HCT116 (cell line): ENCODE measurements at regions of chr5 and their contacts with region 1.

Region 1: GRCh38 chr5:36397901-36398536 is 96.3 kb upstream of the RANBP3L start:
- DNase-seq: peak; percentile 28
- ATAC-seq: peak; percentile 74
- H3K4me3 ChIP-seq: no peak overlapping the region
- H3K27ac ChIP-seq: no peak overlapping the region
- H3K4me1 ChIP-seq: no peaks in the 10 kb centered on the region
- H3K27me3 ChIP-seq: no peaks in the 10 kb centered on the region
- CTCF ChIP-seq: peak; percentile 35 to 56 (median 46); a peak in 5 of 6 replicates
- POLR2A ChIP-seq: no peak
- RAD21 ChIP-seq: peak; percentile 67

Region 2: DNA sequence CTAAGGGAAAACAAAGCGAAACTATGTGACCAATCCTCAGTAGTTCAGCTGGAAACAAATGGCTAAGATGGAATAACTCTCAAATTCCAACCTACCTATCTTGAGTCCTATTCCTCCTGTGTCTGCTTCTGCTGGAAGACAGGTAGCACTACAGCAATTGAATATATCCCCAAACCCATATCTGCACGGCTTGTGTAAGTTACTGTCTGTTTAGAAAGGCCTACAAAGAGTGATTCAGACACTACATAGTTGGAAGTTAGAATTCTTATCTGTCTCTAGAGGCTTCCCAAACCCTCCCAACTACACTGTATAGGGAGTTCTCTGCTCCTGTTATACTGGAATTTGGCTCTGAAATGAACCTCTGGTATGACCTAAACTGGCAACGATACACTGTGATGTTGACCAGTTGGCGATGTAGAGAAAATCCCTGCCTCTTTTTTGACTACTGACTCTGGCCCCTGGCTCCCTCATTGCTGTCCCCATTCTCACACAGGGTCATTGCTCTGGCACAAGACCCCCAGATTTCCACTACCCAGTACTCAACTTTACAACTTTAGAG is 133.7 kb before region 1 on chr5:
- CTCF ChIA-PET with region 1: interaction called, 3 read pairs
- POLR2A ChIA-PET with region 1: no interaction called
- RAD21 ChIA-PET with region 1: no interaction called
- intact Hi-C with region 1: loop called (anchors 1 kb)
- DNase-seq: no peak
- ATAC-seq: no peak
- H3K4me3 ChIP-seq: no peak overlapping the region
- H3K27ac ChIP-seq: no peak overlapping the region
- H3K4me1 ChIP-seq: no peaks in the 10 kb centered on the region
- H3K27me3 ChIP-seq: no peaks in the 10 kb centered on the region
- CTCF ChIP-seq: no peak
- POLR2A ChIP-seq: no peak
- RAD21 ChIP-seq: no peak

Region 3: GRCh38 chr5:36305571-36306326 is 92.3 kb before region 1 on chr5:
- CTCF ChIA-PET with region 1: no interaction called
- POLR2A ChIA-PET with region 1: no interaction called
- RAD21 ChIA-PET with region 1: no interaction called
- intact Hi-C with region 1: no loop called
- DNase-seq: peak; percentile 21
- ATAC-seq: peak; percentile 98
- H3K4me3 ChIP-seq: no peak overlapping the region
- H3K27ac ChIP-seq: no peak overlapping the region
- H3K4me1 ChIP-seq: no peaks in the 10 kb centered on the region
- H3K27me3 ChIP-seq: peaks cover 4% of the 10 kb centered on the region; the same call in 1 of the 2 replicates
- CTCF ChIP-seq: peak; percentile 61 to 80 (median 76)
- POLR2A ChIP-seq: no peak
- RAD21 ChIP-seq: peak; percentile 82

Region 4: GRCh38 chr5:36646507-36647023 is 248.5 kb after region 1 on chr5:
- CTCF ChIA-PET with region 1: no interaction called
- POLR2A ChIA-PET with region 1: no interaction called
- RAD21 ChIA-PET with region 1: no interaction called
- intact Hi-C with region 1: no loop called
- DNase-seq: peak; percentile 27
- ATAC-seq: peak; percentile 83
- H3K4me3 ChIP-seq: peak overlapping the region in 1 of 2 experiments; percentile 12; a peak in 1 of 4 replicates
- H3K27ac ChIP-seq: peak overlapping the region; percentile 72
- H3K4me1 ChIP-seq: peaks cover 21 to 37% of the 10 kb centered on the region in 2 experiments
- H3K27me3 ChIP-seq: no peaks in the 10 kb centered on the region
- CTCF ChIP-seq: no peak
- POLR2A ChIP-seq: no peak
- RAD21 ChIP-seq: no peak